BJ (cell line): ENCODE measurements at regions of chr20 and their contacts with region 1.

Region 1: GRCh38 chr20:44475694-44476560 is at the start of gene TTPAL:
- DNase-seq: peak; percentile 19
- H3K4me3 ChIP-seq: peak within 1 kb of the TSS; percentile 68
- H3K27me3 ChIP-seq: no peaks in the 10 kb centered on the region
- CTCF ChIP-seq: peak; percentile 54
- polyA plus RNA-seq, gene TTPAL: 9.4 and 13.8 TPM in 2 replicates

Region 2: GRCh38 chr20:44217342-44218092 is 258.4 kb before region 1 on chr20:
- CTCF ChIA-PET with region 1: interaction called, 48 read pairs
- POLR2A ChIA-PET with region 1: no interaction called
- DNase-seq: no peak
- H3K4me3 ChIP-seq: no peak overlapping the region
- H3K27me3 ChIP-seq: no peaks in the 10 kb centered on the region
- CTCF ChIP-seq: peak; percentile 96